ENCODE measurements at regions of chr19 and their contacts with region 1.

Region 1: GRCh38 chr19:36489118-36489919 is at the start of gene ZNF566:
- DNase-seq: peak; percentile 94
- H3K4me3 ChIP-seq: peak within 1 kb of the TSS; percentile 99
- H3K27ac ChIP-seq: peak within 1 kb of the TSS; percentile 98
- H3K27me3 ChIP-seq: no peaks in the 10 kb centered on the region
- CTCF ChIP-seq: peak; percentile 16; the same call in 1 of the 2 replicates
- polyA plus RNA-seq, gene ZNF566: 3.5 and 4.9 TPM in 2 replicates

Region 2: DNA sequence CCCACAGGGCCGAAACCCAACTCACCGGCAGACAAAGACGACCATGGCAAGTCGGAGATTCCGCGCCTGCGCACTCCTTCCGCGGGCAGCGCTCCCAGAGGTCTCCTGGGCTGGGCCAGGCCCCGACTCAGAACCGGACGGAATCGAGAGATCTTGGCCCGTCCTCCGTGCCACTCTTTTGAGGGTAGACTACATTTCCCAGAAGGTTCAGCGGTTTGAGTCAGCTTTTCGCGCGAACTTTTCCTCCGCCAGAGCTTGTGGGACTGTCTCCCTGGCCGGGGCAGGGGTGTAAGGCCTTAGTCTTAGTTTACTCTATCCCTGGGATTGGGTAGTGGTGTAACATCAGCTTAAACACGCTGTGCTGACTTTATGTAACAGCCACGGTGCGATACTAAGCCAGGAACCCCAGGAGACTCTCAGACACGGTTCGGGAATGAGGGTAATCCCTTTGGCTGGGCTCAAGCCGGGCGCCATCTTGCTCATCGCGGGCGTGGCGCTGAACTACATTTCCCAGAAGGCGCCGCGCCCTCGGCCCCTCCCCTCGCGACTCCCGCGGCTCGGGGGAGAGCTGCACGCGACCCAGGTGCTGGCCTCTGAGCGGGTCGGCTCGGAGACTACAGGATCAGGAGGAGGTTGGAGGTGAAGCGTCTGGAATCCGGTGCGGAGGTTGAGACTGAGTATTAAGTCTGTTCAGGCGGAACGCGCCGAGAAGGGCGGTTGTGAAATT is 39.0 kb after region 1 on chr19 and contains the start of gene ZNF260:
- CTCF ChIA-PET with region 1: interaction called, 5 read pairs
- POLR2A ChIA-PET with region 1: interaction called, 17 read pairs
- DNase-seq: peak; percentile 93
- H3K4me3 ChIP-seq: peak within 1 kb of the TSS; percentile 93
- H3K27ac ChIP-seq: peak within 1 kb of the TSS; percentile 87
- H3K27me3 ChIP-seq: no peaks in the 10 kb centered on the region
- CTCF ChIP-seq: no peak
- polyA plus RNA-seq, gene ZNF260: 10.5 and 14.7 TPM in 2 replicates

Measured in AG04450 (cell line).